IMR-90 (cell line): ENCODE measurements at regions of chr11 and their contacts with region 1.

Region 1: DNA sequence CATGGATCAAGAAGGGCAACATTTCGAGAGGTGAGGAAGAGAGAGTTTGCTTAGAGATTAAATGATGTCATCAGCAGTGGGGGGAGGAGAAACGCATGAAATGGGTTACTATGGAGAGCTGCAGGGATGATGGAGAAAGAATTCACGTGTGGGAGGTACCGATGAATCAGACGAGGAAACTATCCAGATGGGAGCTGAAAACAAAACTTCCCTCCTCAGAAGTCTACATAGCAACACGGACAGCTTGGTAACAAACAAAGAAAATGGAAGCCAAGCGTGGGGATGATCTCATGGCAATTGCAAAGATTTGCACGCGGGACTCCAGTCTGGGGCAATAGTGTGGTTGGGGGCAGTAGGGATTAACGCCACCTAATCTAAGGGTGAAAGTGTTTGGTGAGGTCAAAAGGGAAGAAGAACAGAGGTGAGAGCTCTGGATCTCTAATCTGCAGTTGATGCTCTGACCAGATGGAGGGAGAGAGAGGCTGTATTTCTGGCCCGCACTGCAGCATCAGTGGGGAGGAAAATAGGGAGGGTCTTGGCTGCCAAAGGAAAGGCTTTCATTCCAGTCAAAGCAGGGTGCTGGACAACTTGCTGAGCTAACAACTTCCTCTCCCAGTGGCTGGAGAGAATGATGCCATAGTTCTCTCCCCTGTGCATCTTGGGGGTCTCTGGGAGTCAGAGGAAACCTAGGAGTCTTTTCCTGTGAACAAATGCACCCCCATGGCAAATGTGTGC is 43.4 kb upstream of the CSNK2A3 start:
- DNase-seq: peak; percentile 97
- ATAC-seq: peak; percentile 71
- H3K4me3 ChIP-seq: no peak overlapping the region
- H3K27ac ChIP-seq: no peak overlapping the region; the same call in 1 of the 2 replicates
- H3K4me1 ChIP-seq: peaks cover 17% of the 10 kb centered on the region
- H3K27me3 ChIP-seq: no peaks in the 10 kb centered on the region
- CTCF ChIP-seq: no peak
- POLR2A ChIP-seq: no peak
- RAD21 ChIP-seq: no peak

Region 2: DNA sequence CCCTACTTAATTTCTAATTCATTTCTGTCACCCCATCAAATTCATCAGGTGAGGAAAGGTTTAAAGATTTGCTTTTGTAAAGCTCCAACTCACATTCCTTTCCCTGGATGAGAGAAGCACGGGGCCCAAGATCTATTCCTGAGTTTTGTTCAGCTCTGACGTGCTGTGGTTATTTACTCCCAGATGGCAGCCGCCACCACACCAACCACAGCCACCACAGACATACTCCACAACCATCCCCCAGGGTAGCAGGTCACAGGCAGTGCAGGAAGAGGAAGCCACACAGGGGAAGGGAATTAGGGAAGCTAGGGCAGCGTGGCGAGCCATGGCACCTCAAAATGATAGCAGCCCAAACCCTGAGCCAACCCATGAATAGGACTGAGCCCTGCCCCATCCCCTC is 20.0 kb after region 1 on chr11:
- CTCF ChIA-PET with region 1: no interaction called
- POLR2A ChIA-PET with region 1: no interaction called
- dilution Hi-C with region 1: no loop called
- in situ Hi-C with region 1: no loop called
- intact Hi-C with region 1: loop called (anchors 2 kb)
- DNase-seq: peak; percentile 45
- ATAC-seq: peak; percentile 11
- H3K4me3 ChIP-seq: no peak overlapping the region
- H3K27ac ChIP-seq: no peak overlapping the region
- H3K4me1 ChIP-seq: peaks cover 4% of the 10 kb centered on the region; the same call in 1 of the 2 replicates
- H3K27me3 ChIP-seq: no peaks in the 10 kb centered on the region; the same call in 1 of the 2 replicates
- CTCF ChIP-seq: no peak
- POLR2A ChIP-seq: no peak
- RAD21 ChIP-seq: no peak

Region 3: DNA sequence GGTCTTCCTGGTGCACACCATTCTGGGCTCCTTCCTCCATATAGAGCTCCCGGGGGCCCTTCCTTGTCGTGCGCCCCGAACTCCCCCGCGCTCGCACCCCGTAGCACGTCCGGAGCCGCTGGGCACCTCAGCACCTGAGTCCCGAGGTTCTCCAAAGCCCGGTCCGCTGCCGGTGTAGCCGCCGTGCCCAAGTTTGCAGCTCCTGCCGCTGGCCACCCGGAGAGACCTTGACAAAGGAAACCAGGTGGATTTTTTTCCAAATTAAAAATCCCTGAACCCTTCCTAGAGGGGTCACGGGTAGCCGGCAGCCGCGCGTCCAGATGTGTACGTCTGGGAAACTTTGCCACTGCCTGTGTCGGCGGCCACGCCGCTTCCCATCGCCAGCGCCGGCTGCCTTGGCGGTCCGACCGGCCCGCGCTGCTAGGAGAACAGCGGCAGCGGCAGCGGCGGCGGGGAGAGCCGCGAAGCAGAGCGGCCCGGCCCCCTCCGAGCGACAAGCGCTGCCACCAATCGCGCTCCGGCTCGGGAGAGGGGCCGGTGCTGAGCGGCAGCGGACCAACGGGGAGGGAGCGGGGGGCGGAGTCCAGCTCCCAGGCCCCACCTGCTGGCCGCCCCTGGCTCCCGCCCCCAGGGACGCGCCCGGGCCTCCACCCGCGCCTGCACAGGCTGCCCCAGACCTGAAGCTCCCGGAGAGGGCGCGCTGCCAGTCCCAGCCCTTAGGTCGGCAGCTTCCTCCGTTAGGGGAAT is 225.3 kb after region 1 on chr11 and contains the start of gene GALNT18:
- CTCF ChIA-PET with region 1: no interaction called
- POLR2A ChIA-PET with region 1: no interaction called
- dilution Hi-C with region 1: no loop called
- in situ Hi-C with region 1: no loop called
- intact Hi-C with region 1: loop called (anchors 10 kb)
- DNase-seq: peak; percentile 90
- ATAC-seq: peak; percentile 99
- H3K4me3 ChIP-seq: peak within 1 kb of the TSS; percentile 48
- H3K27ac ChIP-seq: no peak within 1 kb of the TSS; the same call in 1 of the 2 replicates
- H3K4me1 ChIP-seq: peaks cover 4% of the 10 kb centered on the region
- H3K27me3 ChIP-seq: peaks cover 21% of the 10 kb centered on the region
- CTCF ChIP-seq: peak; percentile 50
- POLR2A ChIP-seq: peak; percentile 81
- RAD21 ChIP-seq: peak; percentile 2; the same call in 1 of the 2 replicates
- total RNA-seq, gene GALNT18: 9.4 and 11.3 TPM in 2 replicates